Cardiac septum (tissue), 1 donor: ENCODE measurements at regions of chr4 and their contacts with region 1.

Region 1: GRCh38 chr4:142331132-142331531 is 515.0 kb downstream of the INPP4B start:
- DNase-seq: no peak

Region 2: GRCh38 chr4:142265536-142265935 is 65.6 kb before region 1 on chr4:
- intact Hi-C with region 1: loop called (anchors 2 kb)
- DNase-seq: no peak